Posterior cingulate gyrus (tissue), 11 donors: ENCODE measurements at regions of chr1 and their contacts with region 1.

Region 1: DNA sequence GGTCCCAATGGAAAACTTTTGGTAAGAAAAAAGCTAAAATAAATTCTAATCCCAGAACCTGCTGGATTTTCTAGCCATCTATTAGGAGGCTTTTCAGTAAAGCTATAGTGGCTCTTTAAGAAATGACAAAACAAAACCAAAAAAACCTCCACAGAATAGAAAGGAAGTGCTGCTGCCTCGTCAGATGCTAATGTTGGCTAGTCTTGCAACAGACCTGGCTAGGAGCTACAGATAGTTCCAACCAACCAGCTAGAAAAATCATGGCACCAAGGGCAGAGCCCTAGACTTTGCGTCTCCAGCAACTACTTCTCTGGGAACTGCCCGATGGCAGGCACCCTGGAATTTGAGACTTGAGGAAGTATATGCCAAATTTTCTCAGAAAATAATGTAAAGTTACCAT is 7.6 kb downstream of the CD101 start:
- DNase-seq: no peak

Region 2: GRCh38 chr1:116104667-116105205 is 904.4 kb before region 1 on chr1:
- intact Hi-C with region 1: no loop called
- DNase-seq: no peak

Region 3: GRCh38 chr1:117045644-117046043 is 36.5 kb after region 1 on chr1:
- intact Hi-C with region 1: loop called (anchors 5 kb)
- DNase-seq: peak in 1 of 10 donors; percentile 74